ENCODE measurements at regions of chr9 and their contacts with region 1.

Region 1: GRCh38 chr9:22079873-22080341 is 70.8 kb upstream of the CDKN2B start:
- DNase-seq: peak; percentile 84
- H3K4me3 Mint-ChIP-seq: no peak overlapping the region
- H3K27ac Mint-ChIP-seq: no peak overlapping the region
- H3K4me1 Mint-ChIP-seq: peaks cover 33% of the 10 kb centered on the region
- H3K27me3 Mint-ChIP-seq: peaks cover 50% of the 10 kb centered on the region

Region 2: GRCh38 chr9:21624675-21625644 is 454.9 kb before region 1 on chr9:
- CTCF ChIA-PET with region 1: no interaction called
- intact Hi-C with region 1: loop called (anchors 5 kb)
- DNase-seq: peak; percentile 26
- H3K4me3 Mint-ChIP-seq: no peak overlapping the region
- H3K27ac Mint-ChIP-seq: peak overlapping the region; percentile 42
- H3K4me1 Mint-ChIP-seq: peaks cover 34% of the 10 kb centered on the region
- H3K27me3 Mint-ChIP-seq: no peaks in the 10 kb centered on the region

Region 3: DNA sequence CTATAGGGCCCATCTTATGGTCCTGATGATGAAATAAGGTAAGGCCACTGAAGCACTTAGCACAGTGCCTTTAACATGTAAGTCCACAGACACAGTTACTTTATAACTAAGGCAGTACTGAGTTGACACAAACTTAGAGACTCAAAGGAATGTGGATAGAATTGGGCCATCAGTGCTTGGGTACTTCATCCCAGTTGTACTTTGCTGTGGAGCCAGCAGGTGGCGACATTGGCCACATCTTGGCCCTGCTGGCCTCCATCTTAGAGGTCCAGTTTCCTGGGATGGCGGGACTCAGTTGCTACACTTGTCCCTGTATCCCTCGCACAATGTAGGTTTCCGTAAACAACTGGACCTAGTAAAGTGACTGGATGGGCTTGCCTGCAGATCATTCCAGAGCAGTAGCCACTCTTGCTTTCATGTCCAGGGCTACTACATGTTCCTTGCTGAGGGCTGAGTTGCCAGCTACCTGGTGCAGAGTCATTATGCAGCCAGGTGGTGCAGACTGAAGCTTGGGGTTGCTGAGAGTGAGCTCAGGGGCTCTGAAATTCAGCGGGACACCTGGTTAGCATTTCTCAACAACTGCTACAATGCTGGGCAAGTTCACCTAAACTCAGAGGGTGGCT is 266.9 kb before region 1 on chr9:
- CTCF ChIA-PET with region 1: no interaction called
- intact Hi-C with region 1: loop called (anchors 1 kb)
- DNase-seq: peak; percentile 76
- H3K4me3 Mint-ChIP-seq: no peak overlapping the region
- H3K27ac Mint-ChIP-seq: no peak overlapping the region
- H3K4me1 Mint-ChIP-seq: peaks cover 56% of the 10 kb centered on the region
- H3K27me3 Mint-ChIP-seq: no peaks in the 10 kb centered on the region

Region 4: DNA sequence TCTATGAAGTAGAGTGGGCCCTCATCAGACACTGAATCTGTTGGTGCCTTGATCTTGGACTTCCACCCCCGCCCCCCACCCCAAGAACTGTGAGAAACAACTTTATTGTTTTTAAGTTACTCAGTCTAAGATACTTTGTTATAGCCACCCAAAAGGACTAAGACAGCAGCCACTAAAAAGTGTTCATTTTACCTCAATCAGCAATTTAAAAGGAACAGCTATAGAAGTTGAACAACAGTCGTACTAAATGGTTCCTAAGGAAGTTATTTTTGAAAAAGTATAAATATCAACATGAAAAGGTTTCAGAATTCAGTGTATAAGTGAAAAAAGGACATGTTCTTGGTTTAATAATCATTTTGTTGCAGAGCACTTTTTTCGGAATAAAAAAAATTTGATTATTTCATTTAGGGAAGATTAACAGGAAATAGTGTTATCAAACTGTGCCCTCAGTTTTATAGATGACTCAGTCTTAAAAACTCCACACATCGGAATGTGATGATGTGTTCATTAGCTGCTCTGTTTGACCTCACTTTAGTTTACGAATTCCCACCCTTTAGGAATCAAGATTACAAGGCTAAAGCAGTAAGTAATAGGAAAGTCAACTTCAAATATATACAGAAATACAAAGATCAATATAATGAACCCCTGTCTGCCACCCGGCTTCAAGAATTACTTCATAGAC is 206.2 kb before region 1 on chr9:
- CTCF ChIA-PET with region 1: no interaction called
- intact Hi-C with region 1: no loop called
- DNase-seq: no peak
- H3K4me3 Mint-ChIP-seq: no peak overlapping the region
- H3K27ac Mint-ChIP-seq: no peak overlapping the region
- H3K4me1 Mint-ChIP-seq: peaks cover 2% of the 10 kb centered on the region
- H3K27me3 Mint-ChIP-seq: no peaks in the 10 kb centered on the region

Region 5: DNA sequence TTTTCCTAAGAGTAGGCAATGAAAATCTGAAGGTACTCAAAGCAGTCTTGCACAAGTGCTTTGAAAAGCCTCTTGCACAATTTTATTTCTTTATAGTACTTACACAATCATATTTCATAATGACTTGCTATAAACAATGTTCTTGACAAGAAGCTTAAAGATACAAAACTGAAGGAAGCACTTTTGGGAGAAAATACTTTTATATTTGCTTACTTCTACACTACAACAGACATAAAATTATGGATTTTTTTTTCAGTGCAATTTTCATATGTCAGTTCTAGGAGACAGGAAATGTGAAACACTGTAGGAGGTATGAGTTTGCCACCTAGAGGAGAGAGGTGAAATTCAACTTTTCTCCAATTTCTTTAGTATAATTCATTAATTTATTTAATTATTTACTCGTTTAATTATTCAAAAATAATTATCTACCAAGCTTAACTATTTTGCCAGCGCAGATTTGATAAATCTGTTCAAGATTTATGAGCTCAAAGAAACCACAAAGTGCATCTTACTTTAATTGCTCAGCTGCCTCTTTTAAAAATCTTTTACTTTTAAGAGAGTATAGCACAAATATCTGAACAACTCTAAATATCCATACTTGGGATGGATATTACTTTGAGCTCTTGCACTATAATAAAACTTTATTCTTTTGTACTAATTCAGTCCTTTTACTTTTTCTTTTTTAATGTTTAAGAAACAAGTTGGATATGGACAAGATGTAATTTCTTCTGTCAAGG is 41.8 kb before region 1 on chr9:
- CTCF ChIA-PET with region 1: interaction called, 12 read pairs
- intact Hi-C with region 1: no loop called
- DNase-seq: no peak
- H3K4me3 Mint-ChIP-seq: no peak overlapping the region
- H3K27ac Mint-ChIP-seq: no peak overlapping the region
- H3K4me1 Mint-ChIP-seq: peaks cover 9% of the 10 kb centered on the region
- H3K27me3 Mint-ChIP-seq: peaks cover 16% of the 10 kb centered on the region

Region 6: GRCh38 chr9:22147813-22148524 is 68.1 kb after region 1 on chr9:
- CTCF ChIA-PET with region 1: no interaction called
- intact Hi-C with region 1: loop called (anchors 1 kb)
- DNase-seq: peak; percentile 28
- H3K4me3 Mint-ChIP-seq: no peak overlapping the region
- H3K27ac Mint-ChIP-seq: no peak overlapping the region
- H3K4me1 Mint-ChIP-seq: peaks cover 22% of the 10 kb centered on the region
- H3K27me3 Mint-ChIP-seq: peaks cover 11% of the 10 kb centered on the region